Activated T-helper 1 cell treated with anti-CD3 and anti-CD28 coated beads, Interleukin-12 subunit alpha, Interleukin-12 subunit beta, Interleukin-2, Interleukin-4 antibody, amounts not matched to agents 30 ng/mL and 10 ng/mL and 1 ng/mL, durations not matched to agents 14 hours and 24 hours and 36 hours (primary cell): ENCODE measurements at regions of chr3 and their contacts with region 1.

Region 1: DNA sequence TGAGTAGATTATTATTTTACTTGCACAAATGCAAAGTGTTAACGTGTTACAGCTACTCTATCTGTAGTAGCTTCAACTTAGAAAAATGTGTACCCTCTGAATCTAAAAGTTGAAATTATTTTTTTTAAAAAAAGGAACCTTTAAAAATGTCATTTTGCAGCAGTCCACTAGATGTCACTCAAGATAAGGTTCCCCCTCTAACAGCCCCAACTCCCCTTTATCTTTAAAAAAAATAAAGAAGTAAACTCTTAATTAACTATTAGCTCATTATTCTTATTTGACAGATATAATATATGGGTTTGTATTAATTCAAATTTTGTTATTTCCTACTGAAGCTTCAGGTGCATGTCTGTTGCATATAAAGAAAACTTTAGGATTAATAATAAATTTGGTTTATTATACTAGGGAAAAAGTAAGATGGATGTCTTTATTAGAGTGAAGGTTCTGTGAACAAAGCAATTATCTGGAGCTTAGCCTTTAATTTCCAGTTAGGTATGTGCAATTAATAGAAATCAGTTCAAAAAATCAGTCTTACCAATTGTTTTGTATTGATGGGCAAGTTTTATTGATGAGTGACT is 288.5 kb downstream of the VGLL3 start:
- DNase-seq: no peak
- H3K4me3 Mint-ChIP-seq: no peak overlapping the region
- H3K27ac Mint-ChIP-seq: no peak overlapping the region
- H3K4me1 Mint-ChIP-seq: no peaks in the 10 kb centered on the region
- H3K27me3 Mint-ChIP-seq: no peaks in the 10 kb centered on the region

Region 2: GRCh38 chr3:87167628-87168456 is 465.4 kb after region 1 on chr3:
- intact Hi-C with region 1: loop called (anchors 5 kb)
- DNase-seq: peak; percentile 16
- H3K4me3 Mint-ChIP-seq: no peak overlapping the region
- H3K27ac Mint-ChIP-seq: no peak overlapping the region
- H3K4me1 Mint-ChIP-seq: peaks cover 4% of the 10 kb centered on the region
- H3K27me3 Mint-ChIP-seq: peaks cover 2% of the 10 kb centered on the region